Ascending aorta (tissue), 2 donors: ENCODE measurements at regions of chr3 and their contacts with region 1.

Region 1: GRCh38 chr3:190224863-190225692 is 97.2 kb downstream of the CLDN1 start:
- DNase-seq: no peak
- H3K4me3 ChIP-seq: no peak overlapping the region
- H3K27ac ChIP-seq: no peak overlapping the region
- H3K4me1 ChIP-seq: no peaks in the 10 kb centered on the region
- H3K27me3 ChIP-seq: no peaks in the 10 kb centered on the region
- CTCF ChIP-seq: peak in 1 of 3 experiments; percentile 48

Region 2: DNA sequence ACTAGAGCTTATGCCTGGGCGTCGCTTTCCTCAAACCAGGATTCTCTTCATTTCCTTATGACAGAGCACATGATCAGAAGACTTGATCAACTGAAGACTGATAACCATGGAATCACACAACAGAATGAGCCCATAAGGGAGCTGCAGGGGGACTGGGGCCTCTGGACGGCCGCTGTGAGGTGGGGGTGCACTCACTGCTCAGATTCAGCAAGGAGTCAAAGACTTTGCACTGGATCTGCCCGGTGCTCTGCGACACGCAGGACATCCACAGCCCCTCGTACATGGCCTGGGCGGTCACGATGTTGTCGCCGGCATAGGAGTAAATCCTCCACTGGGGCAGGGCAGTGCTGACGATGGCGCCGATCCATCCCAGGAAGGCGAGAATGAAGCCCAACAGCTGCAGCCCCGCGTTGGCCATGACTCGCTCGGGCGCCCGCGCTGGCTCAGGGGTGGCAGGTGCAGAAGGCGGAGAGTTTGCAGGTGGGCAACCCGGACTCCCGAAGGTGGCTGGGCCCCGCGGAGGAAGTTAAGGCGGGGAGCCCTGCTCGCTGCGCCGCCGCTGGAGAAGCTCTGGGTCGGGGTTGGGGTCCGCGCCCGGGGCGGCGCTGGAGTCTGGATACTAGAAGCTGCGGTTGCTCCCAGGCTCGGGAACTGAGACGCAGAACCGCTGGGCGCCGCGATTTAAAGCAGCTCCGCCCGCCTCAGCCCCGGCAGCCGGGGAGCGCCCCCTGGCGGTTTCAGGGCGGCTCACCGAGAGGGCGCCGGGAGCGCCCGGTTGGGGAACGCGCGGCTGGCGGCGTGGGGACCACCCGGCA is 96.9 kb after region 1 on chr3 and contains the start of gene CLDN1:
- intact Hi-C with region 1: loop called (anchors 2 kb)
- DNase-seq: peak in 1 of 2 donors; percentile 85
- H3K4me3 ChIP-seq: peak within 1 kb of the TSS; percentile 58 to 69
- H3K27ac ChIP-seq: no peak within 1 kb of the TSS
- H3K4me1 ChIP-seq: no peaks in the 10 kb centered on the region
- H3K27me3 ChIP-seq: no peaks in the 10 kb centered on the region
- CTCF ChIP-seq: peak; percentile 79 to 98 (median 95)
- total RNA-seq, gene CLDN1: 0.53 TPM